GM12878 (cell line): ENCODE measurements at regions of chr7 and their contacts with region 1.

Region 1: DNA sequence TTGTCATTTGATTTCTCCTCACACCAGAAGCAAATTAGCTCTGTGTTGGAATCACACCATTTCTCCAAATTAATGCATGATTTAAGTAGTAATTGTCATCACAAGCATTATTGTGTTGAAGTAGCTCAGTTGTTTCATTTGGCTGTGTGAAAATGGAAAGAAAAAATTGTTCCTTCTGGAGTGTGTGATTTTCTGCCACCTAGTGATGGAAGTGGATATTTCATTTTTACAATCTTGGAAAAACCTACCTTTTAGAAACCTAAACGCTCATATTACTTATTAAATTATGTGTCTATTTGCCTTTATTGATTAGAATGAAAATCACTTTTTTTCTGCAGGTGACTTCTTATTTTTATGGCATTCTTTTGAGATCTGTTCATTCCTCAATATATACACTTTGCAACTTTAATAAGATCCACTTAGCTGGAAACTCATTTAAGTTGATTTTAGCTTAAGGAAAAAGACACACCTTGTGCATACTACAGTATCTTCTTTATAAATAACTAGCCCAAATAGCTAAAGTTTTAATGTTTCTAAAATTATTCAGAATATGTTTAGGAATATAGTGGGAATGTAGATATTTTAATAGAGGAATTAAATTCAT is 50.0 kb downstream of the SRI start:
- DNase-seq: no peak
- ATAC-seq: peak; percentile 59
- H3K4me3 ChIP-seq: no peak overlapping the region
- H3K27ac ChIP-seq: no peak overlapping the region
- H3K4me1 ChIP-seq: no peaks in the 10 kb centered on the region
- H3K27me3 ChIP-seq: no peaks in the 10 kb centered on the region
- CTCF ChIP-seq: peak; percentile 37 to 58 (median 43); a peak in 5 of 6 replicates
- EP300 ChIP-seq: no peak
- POLR2A ChIP-seq: no peak
- RAD21 ChIP-seq: peak; percentile 55

Region 2: DNA sequence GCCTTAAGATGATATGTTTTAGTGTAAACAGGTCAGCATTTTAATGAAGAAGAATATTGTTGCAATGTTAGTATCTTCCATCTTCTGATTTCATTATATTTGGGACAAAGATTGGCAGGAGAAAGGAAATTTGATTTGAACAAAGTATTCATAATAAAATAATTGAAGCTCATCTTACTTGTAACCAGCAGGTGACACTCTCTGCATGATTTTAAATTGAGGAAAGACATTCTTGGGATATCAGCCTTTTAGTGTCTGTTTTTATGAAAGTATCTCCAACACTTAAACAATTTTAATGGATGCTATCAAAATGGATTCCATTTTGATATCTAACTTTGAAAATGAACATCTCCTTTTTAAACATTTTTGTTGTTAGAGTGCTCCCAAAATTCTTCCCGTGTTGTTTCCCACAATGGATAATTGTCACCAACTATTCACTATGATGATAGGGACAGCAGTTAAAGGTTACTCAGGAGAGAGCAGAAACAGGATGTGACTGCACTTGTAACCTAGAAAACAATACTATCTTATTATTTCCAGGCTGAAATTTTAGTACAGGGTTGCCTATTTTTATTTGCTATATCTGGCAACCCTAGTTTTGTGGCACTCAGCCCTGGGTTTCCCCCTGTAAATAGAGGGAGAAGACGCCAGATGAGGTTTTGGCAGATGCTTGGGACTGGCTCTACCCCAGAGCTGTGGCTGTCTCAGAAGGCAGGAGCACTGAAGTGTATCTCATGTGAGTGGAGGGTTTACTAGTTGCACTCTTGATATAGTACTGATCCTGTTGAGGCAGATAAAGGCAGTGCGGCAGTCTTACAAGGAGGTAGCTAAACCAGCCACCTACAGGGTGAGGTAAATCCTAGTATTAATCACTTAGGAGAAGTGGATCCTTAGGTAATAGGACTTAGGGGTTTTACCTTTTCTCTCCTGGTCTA is 663.3 kb before region 1 on chr7:
- CTCF ChIA-PET with region 1: interaction called, 15 read pairs
- POLR2A ChIA-PET with region 1: no interaction called
- RAD21 ChIA-PET with region 1: no interaction called
- SMC1A ChIA-PET with region 1: interaction called, 3 read pairs
- in situ Hi-C with region 1: no loop called
- intact Hi-C with region 1: no loop called
- DNase-seq: no peak
- ATAC-seq: peak; percentile 57
- H3K4me3 ChIP-seq: no peak overlapping the region
- H3K27ac ChIP-seq: no peak overlapping the region
- H3K4me1 ChIP-seq: no peaks in the 10 kb centered on the region
- H3K27me3 ChIP-seq: no peaks in the 10 kb centered on the region
- CTCF ChIP-seq: peak; percentile 12 to 55 (median 31); a peak in 4 of 6 replicates
- EP300 ChIP-seq: no peak
- POLR2A ChIP-seq: no peak
- RAD21 ChIP-seq: peak; percentile 69

Region 3: GRCh38 chr7:87886875-87887274 is 282.9 kb before region 1 on chr7:
- CTCF ChIA-PET with region 1: interaction called, 14 read pairs
- POLR2A ChIA-PET with region 1: no interaction called
- RAD21 ChIA-PET with region 1: interaction called, 12 read pairs
- SMC1A ChIA-PET with region 1: interaction called, 5 read pairs
- in situ Hi-C with region 1: no loop called
- intact Hi-C with region 1: no loop called
- DNase-seq: no peak
- ATAC-seq: no peak
- H3K4me3 ChIP-seq: no peak overlapping the region
- H3K27ac ChIP-seq: no peak overlapping the region
- H3K4me1 ChIP-seq: no peaks in the 10 kb centered on the region
- H3K27me3 ChIP-seq: no peaks in the 10 kb centered on the region
- CTCF ChIP-seq: peak in 2 of 3 experiments; percentile 8 to 32; a peak in 2 of 6 replicates
- EP300 ChIP-seq: no peak
- POLR2A ChIP-seq: no peak
- RAD21 ChIP-seq: peak; percentile 56

Region 4: DNA sequence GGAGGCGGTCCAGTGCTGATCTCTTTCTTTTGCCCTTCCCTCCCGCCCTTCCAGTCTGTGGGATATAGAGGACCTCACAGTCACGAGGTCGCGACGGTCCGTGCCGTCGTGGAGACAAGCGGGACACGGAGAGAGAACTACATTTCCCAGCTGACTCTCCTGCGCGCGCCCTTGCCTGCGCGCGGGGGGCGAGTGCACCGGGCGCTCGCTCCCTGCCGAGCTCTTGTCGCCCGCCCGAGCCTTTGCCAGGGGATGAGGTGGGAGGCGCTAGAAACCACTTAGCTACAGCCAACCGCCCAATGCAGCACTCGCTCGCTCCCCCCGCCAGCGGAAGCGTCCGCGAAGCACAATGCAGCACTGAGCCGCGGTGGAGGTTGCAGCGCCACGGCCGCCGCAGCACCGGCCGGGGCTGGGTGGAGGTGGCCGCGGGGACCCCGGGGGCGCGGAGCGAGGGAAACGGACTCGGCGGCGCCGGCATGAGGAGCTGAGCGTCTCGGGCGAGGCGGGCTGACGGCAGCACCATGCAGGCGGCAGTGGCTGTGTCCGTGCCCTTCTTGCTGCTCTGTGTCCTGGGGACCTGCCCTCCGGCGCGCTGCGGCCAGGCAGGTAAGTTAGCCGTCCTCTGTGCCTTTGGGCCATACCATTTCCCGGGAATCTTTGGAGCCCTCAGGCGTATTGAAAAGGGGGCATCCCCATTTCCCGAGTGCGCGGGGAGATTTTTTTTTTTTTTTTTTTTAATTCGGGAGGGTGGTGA is 235.7 kb before region 1 on chr7 and contains the start of gene ADAM22:
- CTCF ChIA-PET with region 1: interaction called, 15 read pairs
- POLR2A ChIA-PET with region 1: interaction called, 4 read pairs
- RAD21 ChIA-PET with region 1: interaction called, 9 read pairs
- SMC1A ChIA-PET with region 1: interaction called, 4 read pairs
- in situ Hi-C with region 1: no loop called
- intact Hi-C with region 1: no loop called
- DNase-seq: peak; percentile 83
- ATAC-seq: peak; percentile 94
- H3K4me3 ChIP-seq: peak within 1 kb of the TSS; percentile 71
- H3K27ac ChIP-seq: peak within 1 kb of the TSS; percentile 60
- H3K4me1 ChIP-seq: no peaks in the 10 kb centered on the region; the same call in 1 of the 2 replicates
- H3K27me3 ChIP-seq: no peaks in the 10 kb centered on the region
- CTCF ChIP-seq: peak; percentile 14 to 46 (median 16); a peak in 3 of 6 replicates
- EP300 ChIP-seq: peak; percentile 16 to 57; a peak in 1 of 4 replicates
- POLR2A ChIP-seq: peak; percentile 97
- RAD21 ChIP-seq: peak; percentile 19; the same call in 1 of the 2 replicates
- polyA plus RNA-seq, gene ADAM22: 1.4 TPM

Region 5: DNA sequence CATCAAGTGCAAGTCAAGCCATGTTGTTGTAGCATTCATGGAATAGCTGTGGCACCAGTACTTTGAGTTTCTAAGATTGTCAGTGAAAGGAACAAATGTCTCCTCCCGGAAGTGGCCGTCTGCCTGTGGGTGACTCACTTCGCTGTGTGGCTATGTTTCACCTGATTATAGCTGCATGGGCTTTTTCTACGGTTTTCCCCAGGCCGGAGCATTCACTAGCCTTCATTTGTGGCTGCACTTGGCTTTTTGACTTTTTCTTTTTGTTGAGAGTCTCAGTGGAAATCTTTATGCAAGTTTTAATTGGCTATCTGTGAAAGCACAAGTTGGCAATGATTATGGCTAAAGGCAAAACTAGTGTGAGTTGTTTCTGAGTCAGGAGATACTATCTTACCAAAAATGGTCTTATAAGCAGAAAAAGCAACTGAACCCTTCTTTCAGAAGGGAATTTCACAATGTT is 15.1 kb after region 1 on chr7:
- CTCF ChIA-PET with region 1: interaction called, 21 read pairs
- POLR2A ChIA-PET with region 1: no interaction called
- RAD21 ChIA-PET with region 1: interaction called, 7 read pairs
- SMC1A ChIA-PET with region 1: interaction called, 5 read pairs
- in situ Hi-C with region 1: no loop called
- intact Hi-C with region 1: no loop called
- DNase-seq: peak; percentile 58
- ATAC-seq: peak; percentile 98
- H3K4me3 ChIP-seq: no peak overlapping the region
- H3K27ac ChIP-seq: peak overlapping the region; percentile 47
- H3K4me1 ChIP-seq: peaks cover 5% of the 10 kb centered on the region; the same call in 1 of the 2 replicates
- H3K27me3 ChIP-seq: no peaks in the 10 kb centered on the region
- CTCF ChIP-seq: no peak
- EP300 ChIP-seq: peak in 1 of 2 experiments; percentile 39; a peak in 1 of 4 replicates
- POLR2A ChIP-seq: no peak
- RAD21 ChIP-seq: no peak

Region 6: DNA sequence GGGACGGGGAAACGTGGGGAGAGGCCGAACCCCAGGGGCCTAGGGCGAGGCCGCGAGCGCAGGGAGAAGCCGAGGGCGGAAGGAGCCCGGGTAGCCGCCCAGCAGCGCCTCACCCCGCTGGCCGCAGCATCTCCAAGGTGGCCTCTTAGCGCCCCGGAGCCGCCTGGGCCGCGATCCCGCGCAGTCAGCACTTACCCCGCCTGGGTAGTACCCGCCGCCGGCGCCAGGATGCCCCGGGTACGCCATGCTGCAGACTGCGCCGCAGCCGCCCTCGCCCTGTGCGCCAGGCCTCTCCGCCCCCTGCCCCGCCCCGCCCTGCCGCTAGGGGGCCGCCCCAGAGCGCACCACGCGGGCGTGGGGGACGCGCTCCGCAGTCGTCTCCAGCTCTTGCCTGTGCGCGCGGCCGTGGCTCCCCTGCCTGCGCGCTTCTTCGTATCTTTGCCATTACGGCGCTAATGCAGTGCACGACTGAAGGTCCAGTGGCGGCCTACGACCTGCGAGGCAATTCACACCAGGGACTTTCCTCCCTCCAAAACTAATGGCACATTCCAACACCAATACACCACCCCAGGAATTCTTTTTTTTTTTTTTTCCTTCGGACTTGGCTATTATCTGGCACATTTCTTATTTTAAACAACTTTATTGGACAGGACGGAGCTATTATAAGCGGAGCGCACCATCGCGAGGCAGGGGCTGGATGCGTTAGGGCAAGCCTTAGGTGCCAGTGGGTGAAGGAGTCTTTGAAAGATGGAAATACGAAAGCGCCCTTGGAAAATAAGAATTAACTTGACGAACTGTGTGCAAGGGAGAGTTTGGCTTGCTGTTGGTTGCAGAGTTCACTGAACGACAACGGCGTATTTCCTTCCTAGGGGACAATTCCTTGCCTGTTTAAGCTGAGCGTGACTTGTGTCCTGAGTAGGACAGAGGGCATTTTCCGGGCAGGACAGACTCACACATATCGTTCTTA is 50.2 kb after region 1 on chr7 and contains the start of gene SRI:
- CTCF ChIA-PET with region 1: interaction called, 10 read pairs
- POLR2A ChIA-PET with region 1: no interaction called
- RAD21 ChIA-PET with region 1: interaction called, 5 read pairs
- SMC1A ChIA-PET with region 1: no interaction called
- in situ Hi-C with region 1: no loop called
- intact Hi-C with region 1: no loop called
- DNase-seq: peak; percentile 40
- ATAC-seq: peak; percentile 83
- H3K4me3 ChIP-seq: peak within 1 kb of the TSS; percentile 80
- H3K27ac ChIP-seq: peak within 1 kb of the TSS; percentile 74
- H3K4me1 ChIP-seq: no peaks in the 10 kb centered on the region
- H3K27me3 ChIP-seq: no peaks in the 10 kb centered on the region
- CTCF ChIP-seq: peak; percentile 43 to 73 (median 70); a peak in 5 of 6 replicates
- EP300 ChIP-seq: no peak
- POLR2A ChIP-seq: peak; percentile 95
- RAD21 ChIP-seq: no peak
- polyA plus RNA-seq, gene SRI: 174 to 259 TPM